Common myeloid progenitor, CD34-positive (primary cell): ENCODE measurements at regions of chr3 and their contacts with region 1.

Region 1: GRCh38 chr3:39273119-39273518 is 6.7 kb downstream of the CX3CR1 start:
- DNase-seq: no peak
- H3K4me3 ChIP-seq: no peak overlapping the region
- H3K27ac ChIP-seq: no peak overlapping the region
- H3K4me1 ChIP-seq: peaks cover 2 to 37% (median 13%) of the 10 kb centered on the region in 4 experiments
- H3K27me3 ChIP-seq: no peaks in the 10 kb centered on the region

Region 2: DNA sequence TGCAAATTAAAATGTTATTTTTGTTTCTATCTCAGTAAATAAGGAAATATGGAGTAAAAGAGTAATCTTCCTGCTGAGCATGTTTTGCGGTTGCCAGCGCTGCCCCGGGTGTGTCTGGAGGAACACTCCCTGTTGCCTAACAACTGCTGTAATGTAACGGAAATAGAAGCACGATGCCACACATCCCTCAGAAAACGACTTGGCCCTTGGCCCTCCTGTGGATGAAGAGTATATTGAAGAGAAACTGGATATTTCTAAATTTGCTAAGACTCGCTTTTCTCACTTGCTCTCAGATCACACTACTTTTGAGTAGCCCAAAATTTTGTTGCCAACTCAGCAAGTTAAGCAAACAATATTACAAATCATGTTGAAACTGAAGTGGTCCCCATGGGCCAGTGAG is 12.2 kb before region 1 on chr3:
- CTCF ChIA-PET with region 1: interaction called, 10 read pairs
- POLR2A ChIA-PET with region 1: no interaction called
- DNase-seq: peak; percentile 96 to 99 (median 97)
- H3K4me3 ChIP-seq: peak overlapping the region in 1 of 7 experiments; percentile 4
- H3K27ac ChIP-seq: peak overlapping the region in 1 of 2 experiments; percentile 72
- H3K4me1 ChIP-seq: peaks cover 19 to 65% (median 36%) of the 10 kb centered on the region in 4 experiments
- H3K27me3 ChIP-seq: no peaks in the 10 kb centered on the region

Region 3: DNA sequence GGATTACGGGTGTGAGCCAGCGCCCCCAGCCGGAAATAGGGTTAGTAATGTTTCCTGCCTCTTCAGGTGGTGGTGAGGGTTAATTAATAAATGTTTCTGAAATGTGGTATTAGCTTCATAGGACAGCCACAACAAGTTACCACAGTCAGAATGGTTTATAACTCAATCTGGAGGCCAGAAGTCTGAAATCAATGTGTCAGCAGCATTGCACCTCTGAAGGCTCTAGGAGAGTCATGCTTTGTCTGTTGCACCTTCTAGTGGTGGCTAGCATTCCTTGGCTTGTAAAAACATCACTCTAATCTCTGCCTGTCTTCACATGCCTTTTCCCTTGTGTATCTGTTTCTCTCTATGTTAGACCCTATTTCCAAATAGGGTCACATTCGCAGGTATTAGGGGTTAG is 125.6 kb after region 1 on chr3:
- CTCF ChIA-PET with region 1: no interaction called
- POLR2A ChIA-PET with region 1: no interaction called
- DNase-seq: peak in 1 of 3 donors; percentile 27
- H3K4me3 ChIP-seq: no peak overlapping the region
- H3K27ac ChIP-seq: no peak overlapping the region
- H3K4me1 ChIP-seq: no peaks in the 10 kb centered on the region
- H3K27me3 ChIP-seq: no peaks in the 10 kb centered on the region